Activated CD8-positive, alpha-beta memory T cell treated with anti-CD3 and anti-CD28 coated beads, Interleukin-2, amount 10 ng/mL, durations not matched to agents 7 days and 5 days (primary cell): ENCODE measurements at regions of chr1 and their contacts with region 1.

Region 1: GRCh38 chr1:93304716-93305138 is 41.0 kb upstream of the DR1 start:
- DNase-seq: peak; percentile 56
- ATAC-seq: peak; percentile 61
- H3K4me3 Mint-ChIP-seq: no peak overlapping the region
- H3K27ac Mint-ChIP-seq: no peak overlapping the region
- H3K4me1 Mint-ChIP-seq: no peaks in the 10 kb centered on the region
- H3K27me3 Mint-ChIP-seq: no peaks in the 10 kb centered on the region

Region 2: DNA sequence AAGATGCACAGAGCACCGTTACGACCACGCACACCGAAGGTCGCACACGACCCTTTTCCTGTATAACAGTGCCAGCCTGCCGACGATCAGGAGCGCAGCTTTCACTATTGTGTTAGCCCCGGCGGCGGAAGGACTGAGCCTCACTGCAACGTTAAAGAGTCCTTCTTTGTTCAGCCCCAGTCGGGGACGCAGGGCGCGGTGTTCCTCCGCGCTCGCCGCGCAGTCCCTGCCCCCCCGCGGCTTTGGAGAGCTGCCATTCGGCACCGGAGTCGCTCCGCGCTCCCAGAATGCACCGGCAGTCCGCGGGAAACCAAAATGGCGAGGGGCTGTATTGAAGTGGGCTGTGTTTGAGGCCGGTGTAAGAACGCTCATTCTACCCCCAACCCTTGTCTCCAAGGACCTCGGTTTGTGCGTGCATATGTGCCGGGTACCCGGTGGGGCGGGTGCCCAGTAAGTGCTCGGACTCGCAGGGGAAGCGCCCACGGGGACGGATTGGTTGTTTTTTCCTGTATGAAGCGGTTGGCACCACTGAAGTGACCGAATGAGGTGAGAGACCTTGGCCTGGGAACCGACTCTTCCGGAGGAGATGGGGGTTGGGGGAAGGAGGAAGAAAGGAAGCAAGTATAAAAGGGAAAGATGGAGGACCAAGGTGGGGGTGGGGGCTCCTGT is 225.6 kb before region 1 on chr1 and contains the start of gene MTF2:
- CTCF ChIA-PET with region 1: interaction called, 22 read pairs
- DNase-seq: peak; percentile 97
- ATAC-seq: peak; percentile 96
- H3K4me3 Mint-ChIP-seq: peak within 1 kb of the TSS; percentile 98
- H3K27ac Mint-ChIP-seq: peak within 1 kb of the TSS; percentile 95
- H3K4me1 Mint-ChIP-seq: peaks cover 28% of the 10 kb centered on the region
- H3K27me3 Mint-ChIP-seq: no peaks in the 10 kb centered on the region
- total RNA-seq, gene MTF2: 70.6 to 75.7 TPM

Region 3: GRCh38 chr1:93345633-93346420 is 41.1 kb after region 1 on chr1 and contains the start of gene DR1:
- CTCF ChIA-PET with region 1: interaction called, 21 read pairs
- DNase-seq: peak; percentile 93
- ATAC-seq: peak; percentile 75
- H3K4me3 Mint-ChIP-seq: peak within 1 kb of the TSS; percentile 89
- H3K27ac Mint-ChIP-seq: peak within 1 kb of the TSS; percentile 98
- H3K4me1 Mint-ChIP-seq: peaks cover 22% of the 10 kb centered on the region
- H3K27me3 Mint-ChIP-seq: no peaks in the 10 kb centered on the region
- total RNA-seq, gene DR1: 87.5 to 106 TPM

Region 4: DNA sequence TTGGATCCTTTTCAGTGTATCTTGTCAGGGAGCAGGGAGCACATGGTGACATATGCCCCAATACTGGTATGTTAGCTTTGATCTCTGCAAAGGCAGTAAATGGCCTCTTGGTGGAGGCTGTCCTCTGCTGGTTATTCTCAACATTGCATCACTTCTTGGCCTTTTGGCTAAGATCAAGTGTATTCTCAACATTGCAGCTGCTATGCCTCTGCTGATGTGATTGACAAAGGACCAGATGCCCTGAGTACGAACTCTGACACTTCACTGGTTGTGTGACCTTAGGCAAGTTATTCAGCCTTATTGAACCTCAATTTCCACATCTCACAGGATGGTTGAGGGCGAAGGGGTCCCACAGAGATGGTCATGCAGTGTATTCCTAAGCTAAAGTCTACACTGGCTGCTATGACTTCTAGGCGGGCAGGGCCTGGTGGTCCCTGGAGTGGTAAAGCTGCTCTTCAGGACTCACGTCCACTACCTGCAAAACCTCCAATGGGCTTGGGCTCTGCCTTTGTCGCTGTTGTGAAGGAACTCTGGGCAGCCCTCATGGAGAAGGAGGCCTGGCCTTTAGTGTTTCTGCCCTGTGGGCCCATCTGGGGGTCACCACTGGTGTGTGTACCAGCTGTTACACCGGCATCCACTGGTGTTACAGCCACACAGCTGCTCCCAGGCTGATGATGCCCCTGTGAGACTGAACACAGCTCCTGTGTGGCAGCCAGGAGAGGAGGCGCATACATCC is 509.5 kb after region 1 on chr1:
- CTCF ChIA-PET with region 1: interaction called, 17 read pairs
- DNase-seq: peak; percentile 67
- ATAC-seq: peak; percentile 61
- H3K4me3 Mint-ChIP-seq: no peak overlapping the region
- H3K27ac Mint-ChIP-seq: no peak overlapping the region
- H3K4me1 Mint-ChIP-seq: peaks cover 22% of the 10 kb centered on the region
- H3K27me3 Mint-ChIP-seq: no peaks in the 10 kb centered on the region